Psoas muscle (tissue), 8 donors: ENCODE measurements at regions of chr3 and their contacts with region 1.

Region 1: DNA sequence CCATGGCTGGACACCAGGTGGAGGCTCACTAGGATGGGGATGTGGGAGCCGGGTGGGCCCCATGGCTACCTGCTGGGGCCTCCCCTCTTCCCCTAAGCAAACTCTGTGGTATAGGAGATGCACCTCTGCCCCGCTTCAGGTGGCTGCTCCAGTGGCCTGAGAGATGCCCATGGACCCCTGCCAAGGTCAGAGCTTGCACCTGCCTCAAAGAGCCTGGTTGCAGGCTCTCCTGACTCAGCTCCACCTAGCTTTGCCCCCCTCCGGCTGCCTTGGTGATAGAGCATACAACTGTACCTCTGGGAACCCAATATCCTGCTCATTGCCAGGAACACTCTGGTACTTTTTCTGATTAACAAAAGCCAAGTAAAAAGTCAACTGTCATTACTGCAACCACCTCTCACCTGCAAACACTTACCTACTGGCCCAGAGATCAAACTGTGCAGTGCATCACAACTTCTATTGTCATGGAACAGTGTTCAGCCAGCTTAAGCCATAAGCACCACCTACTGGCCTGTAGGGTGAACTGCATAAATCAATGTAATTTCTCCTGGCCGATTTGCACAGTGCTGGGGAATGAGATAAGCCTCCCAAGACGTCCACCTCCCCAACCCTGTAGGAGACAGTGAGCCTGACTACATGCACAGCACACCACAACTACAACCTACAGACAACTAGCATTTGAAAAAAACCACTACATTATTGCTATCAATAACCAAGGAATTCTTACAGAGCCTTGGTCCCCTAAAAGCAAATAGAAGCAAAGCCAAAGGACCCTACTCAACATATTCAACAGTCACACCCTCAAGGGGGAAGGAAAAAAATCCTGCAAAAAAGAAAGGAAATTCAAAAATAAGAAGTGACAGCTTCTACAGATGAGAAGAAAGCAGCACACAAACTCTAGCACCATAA is 352.4 kb upstream of the ARHGEF26 start:
- DNase-seq: no peak
- ATAC-seq: peak in 2 of 4 donors; percentile 54 to 60
- H3K4me3 ChIP-seq: no peak overlapping the region
- H3K27ac ChIP-seq: no peak overlapping the region
- H3K4me1 ChIP-seq: no peaks in the 10 kb centered on the region
- H3K27me3 ChIP-seq: peaks cover 0 to 3% (median 0%) of the 10 kb centered on the region in 3 donors
- CTCF ChIP-seq: peak; percentile 58

Region 2: GRCh38 chr3:153026026-153026425 is 742.8 kb before region 1 on chr3:
- intact Hi-C with region 1: loop called in 1 of 2 experiments (anchors 5 kb)
- DNase-seq: no peak
- ATAC-seq: no peak
- H3K4me3 ChIP-seq: no peak overlapping the region
- H3K27ac ChIP-seq: no peak overlapping the region
- H3K4me1 ChIP-seq: no peaks in the 10 kb centered on the region
- H3K27me3 ChIP-seq: no peaks in the 10 kb centered on the region
- CTCF ChIP-seq: peak; percentile 40

Region 3: GRCh38 chr3:153528473-153528872 is 240.3 kb before region 1 on chr3:
- intact Hi-C with region 1: no loop called
- DNase-seq: no peak
- ATAC-seq: no peak
- H3K4me3 ChIP-seq: no peak overlapping the region
- H3K27ac ChIP-seq: no peak overlapping the region
- H3K4me1 ChIP-seq: no peaks in the 10 kb centered on the region
- H3K27me3 ChIP-seq: no peaks in the 10 kb centered on the region
- CTCF ChIP-seq: no peak